Activated CD4-positive, alpha-beta T cell treated with anti-CD3 and anti-CD28 coated beads, Interleukin-2, amount 10 ng/mL, durations not matched to agents 7 days and 5 days (primary cell): ENCODE measurements at regions of chr3 and their contacts with region 1.

Region 1: GRCh38 chr3:108845709-108846293 is 23.2 kb downstream of the TRAT1 start:
- DNase-seq: no peak
- H3K4me3 Mint-ChIP-seq: no peak overlapping the region
- H3K27ac Mint-ChIP-seq: peak overlapping the region; percentile 37
- H3K4me1 Mint-ChIP-seq: peaks cover 78% of the 10 kb centered on the region
- H3K27me3 Mint-ChIP-seq: no peaks in the 10 kb centered on the region

Region 2: GRCh38 chr3:108608750-108609149 is 237.1 kb before region 1 on chr3:
- CTCF ChIA-PET with region 1: no interaction called
- POLR2A ChIA-PET with region 1: interaction called, 10 read pairs
- DNase-seq: no peak
- H3K4me3 Mint-ChIP-seq: no peak overlapping the region
- H3K27ac Mint-ChIP-seq: no peak overlapping the region
- H3K4me1 Mint-ChIP-seq: peaks cover 23% of the 10 kb centered on the region
- H3K27me3 Mint-ChIP-seq: no peaks in the 10 kb centered on the region

Region 3: GRCh38 chr3:108897883-108898282 is 52.1 kb after region 1 on chr3:
- CTCF ChIA-PET with region 1: no interaction called
- POLR2A ChIA-PET with region 1: no interaction called
- DNase-seq: no peak
- H3K4me3 Mint-ChIP-seq: no peak overlapping the region
- H3K27ac Mint-ChIP-seq: peak overlapping the region; percentile 81
- H3K4me1 Mint-ChIP-seq: peaks cover 23% of the 10 kb centered on the region
- H3K27me3 Mint-ChIP-seq: no peaks in the 10 kb centered on the region